ENCODE measurements at regions of chr17 and their contacts with region 1.

Region 1: GRCh38 chr17:39114723-39115122 is 36.7 kb downstream of the PLXDC1 start:
- DNase-seq: no peak
- H3K4me3 ChIP-seq: no peak overlapping the region
- H3K27ac ChIP-seq: peak overlapping the region in 1 of 2 donors; percentile 76
- H3K4me1 ChIP-seq: no peaks in the 10 kb centered on the region
- H3K27me3 ChIP-seq: no peaks in the 10 kb centered on the region
- CTCF ChIP-seq: no peak
- POLR2A ChIP-seq: no peak

Region 2: DNA sequence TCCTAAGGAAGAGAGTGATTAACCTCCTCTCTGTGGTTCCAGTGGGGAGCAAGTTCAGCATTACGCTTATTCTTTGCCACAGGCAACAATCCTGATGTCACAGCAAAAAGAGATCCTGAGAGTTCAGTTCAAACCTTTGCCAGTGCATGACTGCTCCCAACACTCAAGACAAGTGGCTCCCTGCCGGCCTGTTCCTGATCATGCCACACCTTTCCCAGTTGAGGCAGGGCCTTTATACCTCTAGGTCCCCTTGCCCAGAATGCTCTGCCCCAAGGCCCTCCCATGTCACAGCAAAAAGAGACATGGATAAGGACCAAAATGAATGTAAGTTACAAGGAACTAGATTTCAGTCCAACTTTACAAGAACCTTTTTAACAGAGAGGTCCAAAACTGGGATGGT is 717.5 kb before region 1 on chr17:
- intact Hi-C with region 1: loop called (anchors 5 kb)
- DNase-seq: no peak
- H3K4me3 ChIP-seq: no peak overlapping the region
- H3K27ac ChIP-seq: no peak overlapping the region
- H3K4me1 ChIP-seq: no peaks in the 10 kb centered on the region
- H3K27me3 ChIP-seq: no peaks in the 10 kb centered on the region
- CTCF ChIP-seq: no peak
- POLR2A ChIP-seq: no peak

Region 3: GRCh38 chr17:39082482-39082881 is 32.2 kb before region 1 on chr17:
- intact Hi-C with region 1: loop called (anchors 1 kb)
- DNase-seq: no peak
- H3K4me3 ChIP-seq: no peak overlapping the region
- H3K27ac ChIP-seq: peak overlapping the region; percentile 40 to 79
- H3K4me1 ChIP-seq: no peaks in the 10 kb centered on the region
- H3K27me3 ChIP-seq: no peaks in the 10 kb centered on the region
- CTCF ChIP-seq: no peak
- POLR2A ChIP-seq: no peak

Region 4: DNA sequence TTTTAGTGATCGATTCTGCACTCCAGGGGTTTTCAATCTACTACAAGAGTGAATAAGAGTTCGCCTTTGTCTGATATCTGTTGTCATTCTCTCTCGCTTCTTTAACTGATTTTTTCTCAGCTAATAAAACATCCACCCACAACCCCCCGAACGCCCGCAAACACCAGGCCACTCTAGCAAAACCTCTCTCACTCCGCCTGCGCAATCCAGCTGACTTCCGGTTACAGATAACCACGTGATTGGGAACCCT is 85.0 kb after region 1 on chr17:
- intact Hi-C with region 1: no loop called
- DNase-seq: peak; percentile 90 to 93
- H3K4me3 ChIP-seq: peak overlapping the region; percentile 95 to 100 (median 95)
- H3K27ac ChIP-seq: peak overlapping the region; percentile 97 to 98
- H3K4me1 ChIP-seq: peaks cover 12 to 18% of the 10 kb centered on the region in 2 donors
- H3K27me3 ChIP-seq: no peaks in the 10 kb centered on the region
- CTCF ChIP-seq: no peak
- POLR2A ChIP-seq: no peak